Common myeloid progenitor, CD34-positive (primary cell): ENCODE measurements at regions of chr15 and their contacts with region 1.

Region 1: GRCh38 chr15:59688841-59689625 is at the start of gene BNIP2:
- DNase-seq: peak; percentile 99 to 100 (median 100)
- H3K4me3 ChIP-seq: peak within 1 kb of the TSS; percentile 74 to 100 (median 90)
- H3K27ac ChIP-seq: peak within 1 kb of the TSS; percentile 97 to 99
- H3K4me1 ChIP-seq: peaks cover 36 to 55% (median 49%) of the 10 kb centered on the region in 4 experiments
- H3K27me3 ChIP-seq: no peaks in the 10 kb centered on the region

Region 2: DNA sequence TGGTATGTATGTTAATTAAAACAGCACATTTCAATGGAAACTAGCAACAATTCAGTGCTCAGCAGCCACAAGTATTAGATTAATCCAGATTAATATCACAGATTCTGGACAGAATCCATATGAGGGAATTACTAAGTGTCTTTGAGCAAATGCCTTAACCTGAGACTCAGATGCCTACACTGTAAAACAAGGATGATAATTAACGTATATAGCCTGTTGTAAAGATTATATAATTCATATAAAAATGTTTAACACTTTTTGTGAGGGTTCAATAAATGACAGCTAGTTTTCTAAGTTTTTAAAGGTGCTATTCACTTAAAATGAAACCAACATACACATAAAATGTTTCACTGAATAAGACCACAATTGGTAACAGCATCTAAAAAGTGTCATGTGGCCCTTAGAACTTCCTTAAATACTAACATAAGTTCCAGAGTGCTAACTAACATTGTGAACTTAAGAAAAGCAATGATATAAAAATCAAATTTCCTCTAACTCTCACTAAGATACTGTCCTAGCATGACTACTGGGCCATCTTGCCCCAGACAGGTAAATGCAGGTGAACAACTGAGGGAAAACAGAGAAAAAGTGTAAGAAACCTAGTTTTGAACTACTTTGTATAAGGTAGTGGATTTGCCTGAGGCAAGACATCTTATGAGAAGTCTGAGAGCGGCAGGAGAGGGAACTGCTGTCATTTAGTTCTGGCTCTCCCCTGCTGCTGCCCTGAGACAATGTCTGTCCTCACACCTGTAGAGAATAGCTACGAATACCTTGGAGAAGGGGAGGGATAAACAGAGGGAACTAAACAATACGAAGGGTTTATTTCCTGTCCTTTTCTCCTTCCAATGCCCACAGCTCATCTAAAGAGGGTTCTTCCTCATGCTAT is 1090.8 kb before region 1 on chr15:
- CTCF ChIA-PET with region 1: no interaction called
- POLR2A ChIA-PET with region 1: no interaction called
- DNase-seq: peak in 2 of 3 donors; percentile 44 to 54
- H3K4me3 ChIP-seq: no peak overlapping the region
- H3K27ac ChIP-seq: peak overlapping the region; percentile 25 to 30
- H3K4me1 ChIP-seq: peaks cover 0 to 14% (median 2%) of the 10 kb centered on the region in 4 experiments
- H3K27me3 ChIP-seq: no peaks in the 10 kb centered on the region

Region 3: GRCh38 chr15:59699810-59700431 is 10.9 kb after region 1 on chr15:
- CTCF ChIA-PET with region 1: interaction called, 10 read pairs
- POLR2A ChIA-PET with region 1: no interaction called
- DNase-seq: no peak
- H3K4me3 ChIP-seq: no peak overlapping the region
- H3K27ac ChIP-seq: no peak overlapping the region
- H3K4me1 ChIP-seq: no peaks in the 10 kb centered on the region
- H3K27me3 ChIP-seq: no peaks in the 10 kb centered on the region